Left cardiac atrium (tissue), 4 donors: ENCODE measurements at regions of chr4 and their contacts with region 1.

Region 1: DNA sequence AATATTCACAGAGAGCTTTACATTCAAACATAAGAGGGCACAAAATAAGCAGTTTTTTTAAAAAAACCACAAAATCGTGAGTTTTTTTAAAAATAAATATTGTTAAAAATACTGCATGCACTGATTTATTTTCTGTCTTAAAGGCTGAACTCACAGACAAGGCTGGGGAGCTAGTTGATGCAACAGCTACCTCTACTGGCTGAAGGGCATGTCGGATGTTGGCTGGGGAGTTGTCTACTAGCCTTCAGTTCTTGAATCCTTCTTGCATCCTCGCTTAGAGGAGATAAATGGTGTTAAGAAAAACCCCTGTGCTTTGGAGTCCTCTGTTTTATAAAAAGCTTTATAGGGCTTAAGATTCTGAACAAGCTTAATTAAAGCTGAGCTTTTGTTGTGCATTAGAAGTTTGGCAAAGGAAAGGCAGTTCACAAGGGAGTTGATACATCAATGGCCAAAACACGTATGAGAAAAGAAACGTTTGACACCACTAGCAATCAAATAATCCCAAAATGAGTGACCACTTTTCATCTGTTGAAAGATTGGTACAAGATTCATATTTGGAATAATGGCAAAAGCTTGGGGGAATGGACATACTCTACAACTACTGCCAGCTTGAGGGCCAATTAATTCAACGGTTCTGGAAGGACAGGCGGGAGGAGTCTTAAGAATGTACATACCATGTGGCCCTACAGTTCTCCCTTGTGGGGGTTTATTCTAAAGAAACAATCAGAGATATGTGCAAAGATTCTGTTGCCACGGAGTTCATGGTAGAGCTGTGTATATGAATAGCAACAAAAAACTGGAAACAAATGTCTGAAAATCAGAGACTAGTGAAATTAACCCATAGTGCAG is 94.7 kb downstream of the SEL1L3 start:
- DNase-seq: peak; percentile 55
- ATAC-seq: peak; percentile 83 to 87

Region 2: GRCh38 chr4:25439918-25440477 is 328.1 kb before region 1 on chr4:
- intact Hi-C with region 1: loop called (anchors 1 to 5 kb)
- DNase-seq: peak; percentile 33
- ATAC-seq: peak; percentile 73 to 74

Region 3: GRCh38 chr4:25608644-25609043 is 159.5 kb before region 1 on chr4:
- intact Hi-C with region 1: no loop called
- DNase-seq: no peak
- ATAC-seq: no peak

Region 4: DNA sequence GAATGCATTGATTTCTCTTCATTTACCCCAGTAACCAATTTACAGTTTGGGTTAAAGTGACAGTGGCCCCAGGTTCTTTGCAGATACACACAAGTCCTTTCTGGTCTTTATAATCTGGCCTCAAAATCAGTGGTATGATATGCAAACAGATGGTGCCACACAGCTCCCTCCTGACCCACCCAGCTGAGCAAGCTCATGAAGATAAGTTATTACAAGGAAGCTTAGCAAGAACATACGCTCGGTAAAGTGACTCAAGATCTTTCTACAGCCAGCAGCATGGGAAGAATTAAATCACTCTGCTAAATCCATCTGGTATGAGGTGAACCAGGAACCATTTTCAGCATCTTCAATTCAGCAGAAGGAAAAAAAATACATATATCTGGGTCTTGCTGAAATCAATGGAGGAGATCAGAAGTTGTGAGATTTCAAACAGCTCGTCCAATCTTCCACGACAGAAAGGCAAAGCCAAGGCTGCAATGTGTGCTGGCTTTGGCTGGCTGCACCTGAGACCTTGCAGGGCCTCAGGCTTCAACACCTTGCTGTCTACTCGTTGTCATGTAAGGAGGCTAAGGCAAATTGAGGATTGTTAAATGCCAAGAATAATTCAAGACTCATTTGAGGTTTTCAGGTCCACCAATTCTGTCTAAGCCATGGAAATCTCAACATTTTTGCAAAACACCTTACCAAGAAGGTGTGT is 66.5 kb after region 1 on chr4:
- intact Hi-C with region 1: no loop called
- DNase-seq: no peak
- ATAC-seq: no peak

Region 5: GRCh38 chr4:26320538-26321325 is 552.6 kb after region 1 on chr4 and contains the start of gene RBPJ:
- intact Hi-C with region 1: no loop called
- DNase-seq: peak; percentile 93
- ATAC-seq: peak; percentile 81 to 83
- total RNA-seq, gene RBPJ: 49.6 to 63.5 TPM

Region 6: DNA sequence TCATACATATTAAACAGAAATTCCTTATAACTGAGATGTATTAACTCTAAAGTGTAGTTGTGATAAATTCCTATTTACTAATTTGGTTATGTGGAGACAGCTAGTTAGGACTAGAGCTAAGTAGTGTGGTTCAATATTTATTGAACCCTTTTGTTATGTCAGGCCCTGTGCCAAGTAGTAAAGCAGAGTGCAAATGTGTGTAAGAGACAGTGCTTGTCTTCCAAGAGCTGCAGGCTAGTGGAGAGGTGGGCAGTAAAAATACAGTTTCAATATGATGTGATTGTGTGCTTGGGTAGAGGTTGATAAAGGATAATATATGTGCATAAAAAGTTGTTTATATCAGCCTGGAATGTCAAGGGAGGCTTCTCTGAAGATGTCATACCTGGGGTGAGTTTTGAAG is 895.8 kb after region 1 on chr4:
- intact Hi-C with region 1: no loop called
- DNase-seq: no peak
- ATAC-seq: no peak